ENCODE measurements at regions of chr6 and their contacts with region 1.

Region 1: GRCh38 chr6:45075246-45075645 is 252.9 kb upstream of the RUNX2 start:
- DNase-seq: peak; percentile 94
- ATAC-seq: peak; percentile 97
- H3K4me3 ChIP-seq: no peak overlapping the region
- H3K27ac ChIP-seq: peak overlapping the region; percentile 41; the same call in 1 of the 2 replicates
- H3K4me1 ChIP-seq: peaks cover 2% of the 10 kb centered on the region
- H3K27me3 ChIP-seq: no peaks in the 10 kb centered on the region
- CTCF ChIP-seq: no peak
- POLR2A ChIP-seq: no peak
- RAD21 ChIP-seq: no peak

Region 2: DNA sequence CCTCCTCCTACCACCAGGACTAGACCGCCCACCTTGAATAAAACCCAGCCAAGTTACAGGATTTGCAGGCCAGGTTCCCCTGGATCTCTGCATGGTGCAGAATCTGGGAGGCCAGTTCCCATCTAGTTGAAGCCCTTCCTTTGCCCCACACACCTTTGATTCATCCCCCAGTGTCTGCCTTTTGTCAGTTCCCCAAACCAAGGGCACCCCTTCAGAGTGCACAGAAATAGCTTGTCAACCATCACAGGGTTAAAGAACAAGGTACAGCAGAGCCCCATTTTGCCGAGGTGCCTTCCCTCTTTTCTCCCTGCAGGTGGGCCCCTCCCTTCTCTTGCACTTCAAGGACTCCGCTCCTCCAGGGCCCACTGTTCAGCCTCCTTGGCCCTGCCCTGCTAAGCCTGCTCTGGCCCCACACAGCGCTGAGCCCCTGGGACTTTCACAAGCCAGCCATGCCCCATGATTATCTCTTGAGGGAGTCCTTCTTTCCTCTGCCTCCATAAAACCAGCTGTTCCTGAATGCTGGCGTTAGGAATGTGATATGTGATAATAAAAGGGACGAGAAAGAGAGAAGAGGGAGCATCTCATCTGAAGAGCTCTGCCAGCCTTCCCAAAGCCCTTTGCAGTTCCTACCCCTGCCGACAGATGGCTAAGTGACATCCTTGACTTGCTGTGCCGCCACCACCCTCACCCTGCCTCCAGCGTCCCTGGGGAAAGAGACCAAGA is 407.4 kb before region 1 on chr6:
- CTCF ChIA-PET with region 1: no interaction called
- POLR2A ChIA-PET with region 1: no interaction called
- dilution Hi-C with region 1: no loop called
- in situ Hi-C with region 1: no loop called
- intact Hi-C with region 1: loop called (anchors 10 kb)
- DNase-seq: no peak
- ATAC-seq: peak; percentile 9
- H3K4me3 ChIP-seq: no peak overlapping the region
- H3K27ac ChIP-seq: no peak overlapping the region
- H3K4me1 ChIP-seq: peaks cover 22% of the 10 kb centered on the region
- H3K27me3 ChIP-seq: peaks cover 11% of the 10 kb centered on the region
- CTCF ChIP-seq: peak; percentile 33
- POLR2A ChIP-seq: no peak
- RAD21 ChIP-seq: peak; percentile 13; the same call in 1 of the 2 replicates

Region 3: DNA sequence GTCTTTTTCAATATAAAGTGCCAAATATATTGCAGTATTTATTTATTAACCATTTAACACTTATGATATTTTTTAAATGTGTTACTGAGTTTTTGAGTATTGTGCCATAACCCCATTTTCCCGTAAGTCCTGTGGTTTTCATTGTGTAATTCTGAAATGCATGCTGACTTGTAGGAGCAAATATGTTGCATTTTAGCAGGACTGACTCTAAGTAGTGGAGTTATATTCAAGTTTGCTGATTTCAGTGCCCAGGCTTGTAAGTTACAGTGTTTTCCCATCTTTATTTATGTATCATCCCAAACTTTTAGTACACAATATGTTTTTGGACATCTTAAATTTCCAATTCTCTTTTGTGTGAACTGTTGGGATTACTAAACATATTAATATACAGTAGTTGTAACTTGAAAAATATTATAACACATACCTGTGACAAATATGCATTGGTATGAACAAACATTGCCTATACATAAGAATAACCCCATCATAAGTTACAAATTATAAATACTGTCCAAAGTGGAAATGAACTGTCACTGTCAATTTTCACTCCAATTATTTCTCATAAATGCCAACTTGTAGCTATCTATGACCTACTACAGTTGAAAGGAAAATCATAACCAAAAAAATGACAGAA is 73.6 kb after region 1 on chr6:
- CTCF ChIA-PET with region 1: no interaction called
- POLR2A ChIA-PET with region 1: no interaction called
- dilution Hi-C with region 1: no loop called
- in situ Hi-C with region 1: no loop called
- intact Hi-C with region 1: loop called (anchors 2 kb)
- DNase-seq: peak; percentile 55
- ATAC-seq: peak; percentile 80
- H3K4me3 ChIP-seq: no peak overlapping the region
- H3K27ac ChIP-seq: no peak overlapping the region
- H3K4me1 ChIP-seq: no peaks in the 10 kb centered on the region
- H3K27me3 ChIP-seq: no peaks in the 10 kb centered on the region
- CTCF ChIP-seq: no peak
- POLR2A ChIP-seq: no peak
- RAD21 ChIP-seq: no peak

Region 4: GRCh38 chr6:45377554-45378333 is 302.5 kb after region 1 on chr6 and contains the start of gene SUPT3H:
- CTCF ChIA-PET with region 1: no interaction called
- POLR2A ChIA-PET with region 1: no interaction called
- dilution Hi-C with region 1: no loop called
- in situ Hi-C with region 1: no loop called
- intact Hi-C with region 1: loop called (anchors 5 kb)
- DNase-seq: peak; percentile 93
- ATAC-seq: peak; percentile 94
- H3K4me3 ChIP-seq: peak within 1 kb of the TSS; percentile 66
- H3K27ac ChIP-seq: peak within 1 kb of the TSS; percentile 95
- H3K4me1 ChIP-seq: no peaks in the 10 kb centered on the region
- H3K27me3 ChIP-seq: no peaks in the 10 kb centered on the region
- CTCF ChIP-seq: peak; percentile 27; the same call in 1 of the 2 replicates
- POLR2A ChIP-seq: peak; percentile 93
- RAD21 ChIP-seq: peak; percentile 41
- total RNA-seq, gene SUPT3H: 4.2 and 5.0 TPM in 2 replicates